Posterior vena cava (tissue), 2 donors: ENCODE measurements at regions of chr1 and their contacts with region 1.

Region 1: DNA sequence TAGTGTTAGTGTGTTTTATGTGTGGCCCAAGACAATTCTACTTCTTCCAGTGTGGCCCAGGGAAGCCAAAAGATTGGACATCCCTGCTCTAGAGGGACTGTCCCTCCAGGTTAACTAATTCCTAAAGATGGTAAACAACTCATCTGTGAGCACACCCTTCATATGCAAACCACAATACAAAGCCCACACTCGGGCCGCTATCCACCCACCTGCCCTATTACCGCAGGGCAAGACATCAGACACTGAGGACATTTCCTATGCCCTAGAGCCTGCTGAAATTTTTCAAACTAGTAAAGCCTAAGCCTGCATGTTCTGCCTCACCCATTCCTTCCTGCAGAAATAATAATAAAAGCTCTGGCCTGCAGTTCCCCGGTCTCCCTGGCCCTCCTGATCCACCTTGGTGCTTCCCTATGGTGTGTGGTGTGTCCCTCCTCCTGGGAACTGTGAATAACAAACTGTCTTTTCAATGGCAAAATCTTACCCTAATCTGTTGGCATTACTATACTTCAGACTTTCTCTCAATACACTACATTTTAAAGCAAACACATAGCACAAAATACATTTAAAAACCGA is 39.3 kb upstream of the NTPCR start:
- DNase-seq: no peak

Region 2: GRCh38 chr1:233639611-233640010 is 728.5 kb after region 1 on chr1:
- intact Hi-C with region 1: loop called in 1 of 2 experiments (anchors 5 kb)
- DNase-seq: no peak

Region 3: DNA sequence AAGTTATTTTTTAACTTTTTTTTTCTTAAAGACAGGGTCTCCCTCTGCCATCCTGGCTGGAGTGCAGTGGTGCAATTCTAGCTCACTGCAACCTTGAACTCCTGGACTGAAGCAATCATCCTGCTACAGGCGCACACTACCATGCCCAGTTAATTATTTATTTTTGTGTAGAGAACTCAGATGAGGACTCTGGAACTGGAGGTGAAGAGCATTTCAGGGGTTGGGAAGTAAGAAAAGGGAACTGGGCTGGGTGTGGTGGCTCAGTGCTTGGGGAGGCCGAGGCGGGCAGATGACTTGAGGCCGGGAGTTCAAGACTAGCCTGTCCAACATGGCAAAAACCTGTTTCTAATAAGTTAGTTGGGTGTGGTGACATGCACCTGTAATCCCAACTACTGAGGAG is 1022.2 kb after region 1 on chr1:
- intact Hi-C with region 1: no loop called
- DNase-seq: no peak

Region 4: DNA sequence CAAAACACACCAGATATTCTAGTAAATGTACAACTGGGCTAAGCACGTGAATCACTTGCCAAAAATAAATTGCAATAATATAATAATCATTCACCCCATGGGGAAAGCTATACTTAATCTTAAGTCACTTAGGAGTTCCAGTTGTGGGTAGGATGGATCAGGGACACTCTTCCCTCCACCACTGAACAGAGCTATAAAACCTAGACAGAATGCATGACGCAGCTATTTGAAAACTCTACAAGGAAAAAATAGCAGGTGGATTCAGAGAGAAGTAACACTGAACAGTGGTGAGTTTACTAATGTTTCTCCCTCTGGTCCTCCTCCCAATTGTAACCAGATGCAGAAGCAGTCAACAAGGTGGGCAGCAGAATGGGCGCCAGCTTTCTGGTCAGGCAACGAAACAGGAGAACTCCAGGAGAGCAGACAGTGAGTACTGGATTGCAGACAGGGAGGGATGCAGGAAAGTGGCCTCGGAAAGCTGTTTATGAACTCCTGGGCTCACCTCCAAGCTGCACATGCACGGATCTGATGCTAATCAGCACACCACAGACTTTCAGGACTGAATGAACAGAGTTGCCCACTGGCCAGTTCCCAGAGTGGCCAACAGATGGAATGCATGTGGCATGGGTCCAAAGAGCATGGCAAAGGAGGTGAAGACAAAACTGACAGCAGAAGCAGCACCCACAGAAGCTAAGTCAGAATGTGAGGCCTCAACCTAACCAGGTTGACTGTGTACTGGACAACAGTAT is 1526.5 kb after region 1 on chr1:
- intact Hi-C with region 1: no loop called
- DNase-seq: no peak